ENCODE measurements at regions of chr19 and their contacts with region 1.

Region 1: DNA sequence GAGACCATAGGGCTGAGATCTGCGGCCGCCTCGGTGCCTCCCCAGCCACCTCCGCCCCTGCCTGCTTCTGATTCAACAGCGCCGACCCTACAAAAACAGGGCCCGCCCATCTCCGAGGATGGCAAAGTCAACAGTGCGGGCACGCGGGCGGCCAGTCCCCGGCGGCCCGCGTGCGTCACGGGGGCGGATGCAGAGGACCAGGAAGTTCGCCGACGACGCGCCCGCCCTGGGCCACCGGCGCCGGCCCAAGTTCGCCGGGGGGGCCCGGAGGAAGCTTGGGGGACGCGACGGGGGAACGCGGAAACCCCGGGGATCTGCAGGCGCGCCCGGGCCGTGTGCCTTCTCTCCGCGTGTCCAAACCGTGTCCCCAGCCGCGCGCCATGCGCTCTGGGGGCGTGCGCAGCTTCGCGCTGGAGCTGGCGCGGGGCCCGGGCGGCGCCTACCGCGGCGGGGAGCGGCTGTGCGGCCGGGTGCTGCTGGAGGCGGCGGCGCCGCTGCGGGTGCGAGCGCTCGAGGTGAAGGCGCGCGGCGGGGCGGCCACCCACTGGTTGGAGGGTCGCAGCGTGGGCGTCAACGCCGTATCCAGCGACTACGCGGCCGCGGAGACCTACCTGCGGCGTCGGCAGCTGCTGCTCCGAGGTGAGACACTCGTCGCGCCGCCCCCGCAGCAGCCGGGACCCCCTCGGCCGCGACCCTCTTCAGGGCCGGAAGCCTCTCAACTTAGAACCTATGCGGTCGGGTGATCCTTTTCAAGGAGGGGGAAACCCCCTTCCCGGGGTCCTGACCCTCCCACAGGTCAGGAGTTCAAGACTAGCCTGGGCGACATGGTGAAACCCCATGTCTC is 6.8 kb upstream of the ARRDC2 start:
- DNase-seq: peak; percentile 95
- ATAC-seq: peak; percentile 87
- H3K4me3 Mint-ChIP-seq: peak overlapping the region; percentile 82
- H3K27ac Mint-ChIP-seq: peak overlapping the region; percentile 99
- H3K4me1 Mint-ChIP-seq: peaks cover 26% of the 10 kb centered on the region
- H3K27me3 Mint-ChIP-seq: no peaks in the 10 kb centered on the region

Region 2: GRCh38 chr19:17797397-17798203 is 203.6 kb before region 1 on chr19:
- CTCF ChIA-PET with region 1: no interaction called
- DNase-seq: no peak
- ATAC-seq: peak; percentile 45
- H3K4me3 Mint-ChIP-seq: no peak overlapping the region
- H3K27ac Mint-ChIP-seq: no peak overlapping the region
- H3K4me1 Mint-ChIP-seq: peaks cover 28% of the 10 kb centered on the region
- H3K27me3 Mint-ChIP-seq: peaks cover 32% of the 10 kb centered on the region

Region 3: DNA sequence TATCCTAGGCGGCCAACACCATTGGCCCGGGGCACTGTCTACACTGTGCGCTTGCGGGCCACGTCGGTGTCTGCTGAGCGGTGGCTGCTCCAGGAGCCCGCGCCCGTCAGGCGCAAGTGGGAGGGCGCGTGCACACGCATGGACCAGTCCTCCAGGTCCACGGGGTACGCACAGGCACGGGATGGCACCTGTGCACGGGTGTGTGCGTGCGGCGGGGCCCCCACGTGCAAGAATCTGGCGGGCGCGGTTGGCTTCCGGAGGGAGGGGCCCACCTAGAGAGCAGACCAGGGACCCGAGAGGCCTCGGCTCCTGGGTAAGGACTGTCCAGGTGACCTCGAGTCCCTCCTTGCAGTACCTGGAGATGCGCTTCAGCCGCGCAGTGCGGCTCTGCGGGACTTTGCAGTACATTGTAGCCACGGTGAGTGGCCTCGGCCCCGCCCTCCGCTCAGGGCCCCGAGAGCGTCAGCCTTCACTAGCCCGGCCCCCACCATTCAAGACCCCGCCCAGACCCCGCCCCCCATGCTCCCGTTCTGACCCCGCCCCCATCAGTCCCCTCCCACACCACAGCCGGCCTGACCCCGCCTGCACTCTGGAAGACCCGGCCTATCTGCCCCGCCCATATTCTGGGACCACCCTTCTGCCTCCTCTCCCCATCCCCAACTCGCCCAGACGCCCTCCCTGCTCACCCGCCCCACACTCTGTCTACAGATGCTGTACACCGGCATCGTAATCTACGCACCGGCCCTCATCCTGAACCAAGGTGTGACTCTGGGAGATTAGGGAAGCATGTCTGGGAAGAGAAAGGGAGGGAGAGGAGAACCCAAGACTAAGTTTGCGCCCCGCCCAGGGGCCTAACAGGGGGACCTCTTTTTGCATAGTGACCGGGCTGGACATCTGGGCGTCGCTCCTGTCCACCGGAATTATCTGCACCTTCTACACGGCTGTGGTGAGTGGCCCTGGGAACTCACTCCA is 127.1 kb before region 1 on chr19:
- CTCF ChIA-PET with region 1: interaction called, 11 read pairs
- DNase-seq: peak; percentile 76
- ATAC-seq: peak; percentile 75
- H3K4me3 Mint-ChIP-seq: peak overlapping the region; percentile 67
- H3K27ac Mint-ChIP-seq: peak overlapping the region; percentile 67
- H3K4me1 Mint-ChIP-seq: peaks cover 22% of the 10 kb centered on the region
- H3K27me3 Mint-ChIP-seq: peaks cover 2% of the 10 kb centered on the region

Region 4: GRCh38 chr19:17947815-17948513 is 53.2 kb before region 1 on chr19:
- CTCF ChIA-PET with region 1: interaction called, 91 read pairs
- DNase-seq: peak; percentile 96
- ATAC-seq: peak; percentile 78
- H3K4me3 Mint-ChIP-seq: peak overlapping the region; percentile 77
- H3K27ac Mint-ChIP-seq: no peak overlapping the region
- H3K4me1 Mint-ChIP-seq: peaks cover 36% of the 10 kb centered on the region
- H3K27me3 Mint-ChIP-seq: peaks cover 40% of the 10 kb centered on the region

Region 5: DNA sequence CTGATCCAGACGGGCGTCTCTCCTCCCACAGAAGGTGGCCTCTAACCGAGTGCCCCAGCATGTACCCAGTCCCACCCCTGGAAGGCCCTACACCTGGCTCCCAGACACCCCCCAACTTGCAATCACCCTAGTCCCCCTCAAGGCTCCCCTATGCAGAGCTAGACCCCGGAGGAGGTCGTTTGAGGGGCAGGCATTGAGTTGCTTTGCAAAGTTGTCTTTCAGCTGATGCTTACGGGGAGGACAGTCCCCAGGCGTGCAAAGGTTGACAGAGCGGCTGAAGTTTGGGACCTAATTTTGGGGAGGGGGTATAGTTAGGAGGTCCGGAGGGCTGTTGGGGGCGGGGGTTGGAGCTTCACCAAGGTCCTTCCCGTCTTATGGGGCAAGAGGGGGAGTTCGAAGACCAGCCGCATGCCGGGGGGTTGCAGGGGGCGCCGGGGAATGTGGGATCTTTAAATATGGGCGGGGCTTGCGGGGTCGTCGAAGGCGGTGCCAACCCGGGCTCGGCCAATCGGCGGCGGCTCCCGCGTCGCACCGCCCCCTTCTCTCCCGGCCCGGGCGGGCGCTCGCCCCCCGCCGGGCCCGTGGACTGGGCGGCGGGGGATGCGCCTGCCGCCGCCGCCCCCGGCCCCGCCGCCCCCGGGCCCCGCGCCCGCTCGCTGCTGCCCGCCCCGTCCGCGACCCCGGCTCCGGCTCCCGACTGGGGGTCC is 34.5 kb before region 1 on chr19 and contains the start of gene KCNN1:
- CTCF ChIA-PET with region 1: interaction called, 34 read pairs
- DNase-seq: no peak
- ATAC-seq: peak; percentile 12
- H3K4me3 Mint-ChIP-seq: no peak within 1 kb of the TSS
- H3K27ac Mint-ChIP-seq: no peak within 1 kb of the TSS
- H3K4me1 Mint-ChIP-seq: peaks cover 2% of the 10 kb centered on the region
- H3K27me3 Mint-ChIP-seq: peaks cover 46% of the 10 kb centered on the region
- total RNA-seq, gene KCNN1: 0.21 TPM in 1 of 2 experiments, not detected in the other

Measured in activated CD8-positive, alpha-beta memory T cell treated with anti-CD3 and anti-CD28 coated beads, Interleukin-2, amount 10 ng/mL, durations not matched to agents 7 days and 5 days (primary cell).